ENCODE measurements at regions of chr5 and their contacts with region 1.

Region 1: DNA sequence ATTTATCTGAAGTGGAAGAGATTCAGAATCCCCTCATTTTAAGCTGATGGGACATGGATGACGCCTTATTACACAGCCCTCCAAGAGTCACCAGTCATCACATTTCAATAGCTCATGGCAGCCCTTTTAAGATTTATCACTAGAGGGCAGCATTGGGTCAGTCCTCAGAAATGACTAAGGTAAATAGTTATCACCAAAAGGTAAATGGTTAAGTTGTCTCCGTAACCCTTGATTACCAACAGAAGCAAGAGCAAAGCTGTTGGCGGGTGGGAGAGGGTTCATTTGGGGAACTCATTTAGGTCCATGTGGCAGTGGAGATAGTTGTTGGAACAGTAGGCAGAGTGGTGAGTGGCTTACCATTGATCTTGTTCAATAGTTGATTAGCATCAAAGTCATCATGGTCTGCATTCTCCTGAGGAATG is 12.0 kb upstream of the C9 start:
- DNase-seq: peak; percentile 65
- H3K4me3 ChIP-seq: no peak overlapping the region
- H3K27ac ChIP-seq: no peak overlapping the region
- H3K4me1 ChIP-seq: no peaks in the 10 kb centered on the region
- H3K27me3 ChIP-seq: no peaks in the 10 kb centered on the region
- CTCF ChIP-seq: peak; percentile 74

Region 2: DNA sequence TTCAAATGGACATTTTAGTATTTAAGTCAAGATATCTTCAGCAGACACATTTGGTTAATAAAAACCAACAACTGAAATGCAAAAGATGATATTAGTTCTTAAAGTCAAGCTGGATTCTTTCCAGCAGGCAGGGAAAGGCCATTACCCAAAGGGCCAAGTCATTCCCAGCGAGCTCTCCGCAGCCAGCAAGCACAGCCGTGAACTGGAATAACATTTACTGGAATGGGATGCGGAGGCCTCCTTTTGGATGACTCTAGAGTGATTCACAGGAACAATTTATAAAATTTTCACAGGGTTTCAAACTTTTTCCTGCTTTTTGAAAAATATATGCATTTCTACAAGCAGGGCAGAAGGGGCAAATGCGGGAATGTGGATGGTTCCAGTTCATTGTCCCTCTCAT is 125.1 kb after region 1 on chr5:
- intact Hi-C with region 1: no loop called
- DNase-seq: no peak
- H3K4me3 ChIP-seq: no peak overlapping the region
- H3K27ac ChIP-seq: no peak overlapping the region
- H3K4me1 ChIP-seq: peaks cover 4% of the 10 kb centered on the region
- H3K27me3 ChIP-seq: no peaks in the 10 kb centered on the region
- CTCF ChIP-seq: no peak

Region 3: DNA sequence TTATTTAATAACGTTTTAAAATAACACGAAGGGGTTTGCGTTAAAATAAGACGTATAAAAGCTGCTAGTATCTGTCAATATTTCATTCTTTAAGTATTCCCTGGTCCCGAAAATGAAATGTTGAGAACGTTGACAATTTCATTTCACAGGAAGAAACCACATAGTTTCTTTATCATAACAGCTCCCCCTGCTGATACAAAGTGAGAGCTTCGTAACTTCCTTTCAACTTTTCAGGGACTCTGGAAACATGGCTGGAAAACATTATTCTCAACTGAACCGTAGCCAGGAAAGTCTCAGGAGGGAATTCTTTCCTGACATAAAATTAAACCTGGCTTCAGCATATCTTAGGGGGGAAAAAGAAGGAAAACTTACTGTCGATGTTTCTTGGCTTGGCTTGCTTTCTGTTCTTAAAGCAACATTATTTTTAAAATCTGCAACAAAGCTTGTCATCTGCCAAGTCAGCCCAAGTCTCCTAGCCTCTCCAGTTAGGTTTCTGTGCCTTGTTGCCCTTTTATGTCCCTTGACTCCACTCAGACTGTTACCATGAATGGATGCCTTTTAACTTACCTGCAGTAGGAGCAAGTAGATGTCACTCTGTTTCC is 171.3 kb after region 1 on chr5:
- intact Hi-C with region 1: loop called (anchors 5 kb)
- DNase-seq: peak; percentile 71
- H3K4me3 ChIP-seq: no peak overlapping the region
- H3K27ac ChIP-seq: no peak overlapping the region
- H3K4me1 ChIP-seq: no peaks in the 10 kb centered on the region
- H3K27me3 ChIP-seq: no peaks in the 10 kb centered on the region
- CTCF ChIP-seq: peak; percentile 58

Region 4: DNA sequence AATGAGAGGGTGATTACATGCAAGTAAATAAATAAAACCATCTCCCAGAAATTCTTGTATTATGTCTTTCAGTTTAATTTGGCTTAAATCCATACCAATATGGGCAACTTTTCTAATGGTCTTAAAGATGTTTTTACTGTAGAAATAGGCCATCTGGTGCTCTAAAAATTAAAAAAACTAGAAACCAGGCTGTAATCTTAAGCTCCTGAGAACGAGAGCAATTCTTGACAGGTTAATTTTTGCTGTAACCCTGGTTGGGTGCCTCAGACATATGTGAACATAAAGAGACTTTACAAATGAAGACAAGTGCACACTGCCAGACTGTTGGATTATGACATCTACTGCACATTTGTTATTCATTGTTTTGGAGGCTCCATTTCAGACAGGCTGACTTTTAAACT is 295.3 kb after region 1 on chr5:
- intact Hi-C with region 1: no loop called
- DNase-seq: no peak
- H3K4me3 ChIP-seq: no peak overlapping the region
- H3K27ac ChIP-seq: no peak overlapping the region
- H3K4me1 ChIP-seq: no peaks in the 10 kb centered on the region
- H3K27me3 ChIP-seq: no peaks in the 10 kb centered on the region
- CTCF ChIP-seq: no peak

Region 5: GRCh38 chr5:39750661-39751060 is 374.4 kb after region 1 on chr5:
- intact Hi-C with region 1: no loop called
- DNase-seq: no peak
- H3K4me3 ChIP-seq: no peak overlapping the region
- H3K27ac ChIP-seq: no peak overlapping the region
- H3K4me1 ChIP-seq: no peaks in the 10 kb centered on the region
- H3K27me3 ChIP-seq: no peaks in the 10 kb centered on the region
- CTCF ChIP-seq: no peak

Measured in colonic mucosa (tissue), 4 donors.